ENCODE measurements at regions of chr2 and their contacts with region 1.

Region 1: DNA sequence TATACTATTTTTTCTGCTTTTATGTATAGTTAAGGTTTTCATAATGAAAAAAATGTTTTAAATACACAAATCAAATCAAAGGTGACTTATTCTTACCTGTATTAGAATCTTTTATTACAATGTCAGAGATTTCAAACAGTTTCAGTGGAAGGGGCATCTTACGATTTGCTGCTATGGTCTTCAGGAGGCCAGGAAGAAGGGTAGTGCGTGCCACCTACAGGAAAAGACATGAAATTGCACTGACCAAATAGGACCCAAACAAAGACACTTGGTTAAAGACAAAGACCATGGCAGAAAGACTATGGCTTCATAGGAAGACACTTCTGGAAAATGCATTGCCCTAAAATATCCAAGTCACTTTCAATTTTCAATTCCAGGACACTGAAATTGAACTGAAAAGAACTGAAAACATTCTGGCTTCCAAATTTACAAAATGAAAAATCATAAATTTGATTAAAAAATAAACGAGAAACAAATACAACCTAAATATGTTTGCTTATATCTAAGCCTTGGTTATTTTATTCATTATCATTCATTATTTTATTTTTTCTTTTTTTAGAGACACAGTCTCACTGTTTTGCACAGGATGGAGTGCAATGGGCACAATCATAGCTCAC is 42.1 kb downstream of the FARSB start:
- DNase-seq: no peak
- H3K4me3 ChIP-seq: no peak overlapping the region
- H3K27ac ChIP-seq: no peak overlapping the region
- H3K4me1 ChIP-seq: no peaks in the 10 kb centered on the region
- H3K27me3 ChIP-seq: no peaks in the 10 kb centered on the region
- CTCF ChIP-seq: peak; percentile 41 to 70 (median 58)

Region 2: GRCh38 chr2:222057347-222058073 is 556.3 kb before region 1 on chr2:
- intact Hi-C with region 1: loop called (anchors 5 kb)
- DNase-seq: no peak
- H3K4me3 ChIP-seq: no peak overlapping the region
- H3K27ac ChIP-seq: no peak overlapping the region
- H3K4me1 ChIP-seq: no peaks in the 10 kb centered on the region
- H3K27me3 ChIP-seq: no peaks in the 10 kb centered on the region
- CTCF ChIP-seq: peak in 2 of 3 experiments; percentile 41 to 59